AG04449 (cell line): ENCODE measurements at regions of chr2 and their contacts with region 1.

Region 1: GRCh38 chr2:30165050-30165520 is 18.3 kb downstream of the YPEL5 start:
- DNase-seq: peak; percentile 76
- H3K4me3 ChIP-seq: no peak overlapping the region
- CTCF ChIP-seq: peak; percentile 76

Region 2: GRCh38 chr2:30178618-30179434 is 13.7 kb after region 1 on chr2:
- CTCF ChIA-PET with region 1: interaction called, 46 read pairs
- POLR2A ChIA-PET with region 1: no interaction called
- DNase-seq: no peak
- H3K4me3 ChIP-seq: no peak overlapping the region
- CTCF ChIP-seq: no peak

Region 3: GRCh38 chr2:30201990-30202389 is 36.9 kb after region 1 on chr2:
- CTCF ChIA-PET with region 1: interaction called, 51 read pairs
- POLR2A ChIA-PET with region 1: no interaction called
- DNase-seq: no peak
- H3K4me3 ChIP-seq: no peak overlapping the region
- CTCF ChIP-seq: no peak

Region 4: GRCh38 chr2:30231212-30231995 is 66.3 kb after region 1 on chr2 and contains the start of gene LBH:
- CTCF ChIA-PET with region 1: interaction called, 13 read pairs
- POLR2A ChIA-PET with region 1: interaction called, 5 read pairs
- DNase-seq: peak; percentile 41
- H3K4me3 ChIP-seq: peak within 1 kb of the TSS; percentile 80
- CTCF ChIP-seq: no peak

Region 5: DNA sequence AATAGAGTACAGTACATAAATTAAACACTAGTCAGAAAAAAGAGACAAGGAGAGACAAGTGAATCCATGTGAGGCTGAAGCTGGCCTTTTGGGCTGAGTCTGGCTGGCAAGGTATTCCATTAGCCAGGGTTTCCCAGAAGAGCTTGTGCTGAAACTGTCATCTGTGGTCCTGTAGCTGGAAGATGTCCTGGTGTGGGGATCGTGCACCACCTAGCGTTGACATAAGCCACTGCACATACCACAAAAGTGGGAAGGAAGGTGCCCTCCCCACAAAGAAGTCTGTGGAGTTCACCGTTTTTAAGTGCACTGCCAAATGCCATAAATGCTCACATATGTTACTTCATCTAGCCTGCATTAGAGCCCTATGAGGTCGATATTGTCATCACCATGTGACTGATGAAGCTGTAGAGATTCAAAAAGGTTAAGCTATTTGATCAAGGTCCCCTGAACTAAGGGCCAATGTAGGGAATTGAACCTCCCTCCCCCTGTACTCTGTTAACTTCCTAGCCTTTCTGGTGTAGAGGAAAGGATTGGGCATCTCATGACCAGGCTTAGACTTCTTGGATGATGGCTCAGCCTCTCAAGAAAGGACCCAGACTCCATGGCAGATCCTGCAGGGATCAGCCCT is 1005.1 kb after region 1 on chr2:
- CTCF ChIA-PET with region 1: interaction called, 10 read pairs
- POLR2A ChIA-PET with region 1: no interaction called
- DNase-seq: peak; percentile 5
- H3K4me3 ChIP-seq: no peak overlapping the region
- CTCF ChIP-seq: peak; percentile 94